CD14-positive monocyte (primary cell): ENCODE measurements at regions of chr12 and their contacts with region 1.

Region 1: GRCh38 chr12:118061011-118061875 is at the start of gene WSB2:
- DNase-seq: peak in 1 of 3 donors; percentile 19
- H3K4me3 ChIP-seq: peak within 1 kb of the TSS; percentile 95 to 99 (median 96)
- H3K4me3 Mint-ChIP-seq: peak within 1 kb of the TSS; percentile 96 to 99
- H3K27ac ChIP-seq: peak within 1 kb of the TSS; percentile 58 to 84
- H3K27ac Mint-ChIP-seq: peak within 1 kb of the TSS; percentile 66 to 96 (median 90)
- H3K4me1 ChIP-seq: peaks cover 50 to 57% of the 10 kb centered on the region in 2 donors
- H3K4me1 Mint-ChIP-seq: peaks cover 52% of the 10 kb centered on the region
- H3K27me3 ChIP-seq: no peaks in the 10 kb centered on the region
- H3K27me3 Mint-ChIP-seq: peaks cover 5 to 10% (median 6%) of the 10 kb centered on the region in 3 donors
- CTCF ChIP-seq: no peak
- polyA plus RNA-seq, gene WSB2: 25.4 to 36.3 (median 25.8) TPM

Region 2: GRCh38 chr12:118016424-118017264 is 44.6 kb before region 1 on chr12 and contains the start of gene RFC5:
- intact Hi-C with region 1: loop called (anchors 5 kb)
- DNase-seq: peak; percentile 95 to 97 (median 97)
- H3K4me3 ChIP-seq: peak within 1 kb of the TSS; percentile 62 to 89 (median 82)
- H3K4me3 Mint-ChIP-seq: peak within 1 kb of the TSS; percentile 86 to 94
- H3K27ac ChIP-seq: peak within 1 kb of the TSS in 1 of 2 donors; percentile 76
- H3K27ac Mint-ChIP-seq: peak within 1 kb of the TSS; percentile 57 to 89 (median 84)
- H3K4me1 ChIP-seq: peaks cover 13% of the 10 kb centered on the region in 2 donors
- H3K4me1 Mint-ChIP-seq: peaks cover 13% of the 10 kb centered on the region
- H3K27me3 ChIP-seq: no peaks in the 10 kb centered on the region
- H3K27me3 Mint-ChIP-seq: peaks cover 1 to 11% (median 11%) of the 10 kb centered on the region in 3 donors
- CTCF ChIP-seq: no peak
- polyA plus RNA-seq, gene RFC5: 6.6 to 8.0 (median 7.5) TPM

Region 3: GRCh38 chr12:118145113-118145797 is 84.0 kb after region 1 on chr12:
- intact Hi-C with region 1: no loop called
- DNase-seq: no peak
- H3K4me3 ChIP-seq: no peak overlapping the region
- H3K4me3 Mint-ChIP-seq: peak overlapping the region in 1 of 2 donors; percentile 31
- H3K27ac ChIP-seq: peak overlapping the region in 1 of 2 donors; percentile 26
- H3K27ac Mint-ChIP-seq: peak overlapping the region in 5 of 7 donors; percentile 3 to 64 (median 37)
- H3K4me1 ChIP-seq: no peaks in the 10 kb centered on the region
- H3K4me1 Mint-ChIP-seq: peaks cover 10% of the 10 kb centered on the region
- H3K27me3 ChIP-seq: no peaks in the 10 kb centered on the region
- H3K27me3 Mint-ChIP-seq: peaks cover 0 to 3% (median 0%) of the 10 kb centered on the region in 3 donors
- CTCF ChIP-seq: no peak